ENCODE measurements at regions of chr11 and their contacts with region 1.

Region 1: GRCh38 chr11:33996498-33997454 is 54.8 kb upstream of the CAPRIN1 start:
- DNase-seq: peak; percentile 67
- H3K4me3 Mint-ChIP-seq: peak overlapping the region; percentile 8
- H3K27ac Mint-ChIP-seq: no peak overlapping the region
- H3K4me1 Mint-ChIP-seq: peaks cover 12% of the 10 kb centered on the region
- H3K27me3 Mint-ChIP-seq: peaks cover 46% of the 10 kb centered on the region

Region 2: DNA sequence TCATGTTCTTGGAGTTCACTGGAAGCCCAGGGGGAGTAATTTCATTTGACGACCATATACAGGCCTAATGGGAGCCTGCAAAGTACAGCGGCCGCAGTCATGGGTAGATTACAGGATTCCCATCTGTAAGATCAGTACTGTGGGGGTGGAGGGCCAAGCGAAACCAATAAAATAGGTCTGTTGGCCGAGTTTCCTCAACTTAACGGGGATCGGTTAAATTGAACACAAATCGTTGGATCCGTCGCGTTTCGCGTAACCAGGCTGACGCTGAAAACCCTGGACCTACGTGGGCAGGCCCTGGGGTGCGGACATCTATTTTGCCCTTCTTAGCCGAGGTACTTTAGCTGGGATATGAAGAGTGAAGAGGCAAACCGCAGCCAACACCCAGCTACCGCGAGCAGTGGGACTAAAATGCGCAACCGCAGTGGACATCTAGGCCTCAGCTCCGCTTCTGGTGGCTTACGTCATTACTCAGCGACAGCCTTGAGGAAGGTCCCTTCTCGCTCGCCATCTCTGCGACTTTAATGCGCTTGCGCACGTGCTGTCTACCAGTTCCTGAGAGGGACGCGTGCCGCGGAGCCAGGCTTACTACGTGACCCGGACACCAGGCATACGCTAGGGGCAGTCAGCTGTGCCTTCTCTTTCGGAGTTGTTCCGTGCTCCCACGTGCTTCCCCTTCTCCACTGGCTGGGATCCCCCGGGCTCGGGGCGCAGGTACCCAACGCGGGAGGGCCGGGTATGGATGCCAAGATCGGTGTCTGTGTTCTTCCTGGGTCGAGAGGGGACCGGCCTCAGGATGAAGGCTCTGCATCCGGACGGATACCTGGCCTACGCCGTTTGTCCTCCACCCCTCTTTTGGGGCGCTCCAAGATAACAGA is 108.5 kb after region 1 on chr11 and contains the start of gene NAT10:
- intact Hi-C with region 1: loop called (anchors 1 kb)
- DNase-seq: peak; percentile 97
- H3K4me3 Mint-ChIP-seq: peak within 1 kb of the TSS; percentile 95
- H3K27ac Mint-ChIP-seq: peak within 1 kb of the TSS; percentile 90
- H3K4me1 Mint-ChIP-seq: peaks cover 48% of the 10 kb centered on the region
- H3K27me3 Mint-ChIP-seq: no peaks in the 10 kb centered on the region
- total RNA-seq, gene NAT10: 157 and 158 TPM in 2 replicates

Region 3: DNA sequence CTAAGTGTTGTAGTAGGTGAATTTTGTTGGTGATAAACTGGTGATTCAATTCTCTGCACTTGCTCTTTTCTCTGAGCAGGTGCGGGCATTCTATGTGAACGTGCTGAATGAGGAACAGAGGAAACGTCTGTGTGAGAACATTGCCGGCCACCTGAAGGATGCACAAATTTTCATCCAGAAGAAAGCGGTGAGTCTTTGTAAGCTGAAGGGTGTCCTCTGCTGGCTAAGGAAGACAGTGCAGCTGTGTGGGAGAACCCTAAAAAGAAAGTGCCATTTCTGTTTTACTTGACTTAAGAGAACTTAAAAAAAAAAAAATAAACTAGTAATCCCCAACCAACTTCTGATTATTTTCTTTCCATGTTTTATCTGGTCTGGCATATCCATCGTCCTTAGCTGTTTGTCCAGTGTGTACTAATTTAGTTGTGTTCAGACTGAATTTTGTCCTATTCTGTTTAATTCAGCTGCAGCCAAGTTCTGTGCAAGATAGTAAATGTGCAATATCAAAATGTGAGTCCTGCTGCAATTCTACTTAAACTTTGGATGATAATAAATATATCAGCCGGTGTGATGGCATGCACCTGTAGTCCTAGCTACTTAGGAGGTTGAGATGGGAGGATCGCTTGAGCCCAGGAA is 471.5 kb after region 1 on chr11:
- intact Hi-C with region 1: loop called (anchors 1 kb)
- DNase-seq: peak; percentile 22
- H3K4me3 Mint-ChIP-seq: no peak overlapping the region
- H3K27ac Mint-ChIP-seq: no peak overlapping the region
- H3K4me1 Mint-ChIP-seq: peaks cover 6% of the 10 kb centered on the region
- H3K27me3 Mint-ChIP-seq: no peaks in the 10 kb centered on the region

Region 4: GRCh38 chr11:34492806-34493414 is 496.1 kb after region 1 on chr11:
- intact Hi-C with region 1: loop called (anchors 2 kb)
- DNase-seq: no peak
- H3K4me3 Mint-ChIP-seq: no peak overlapping the region
- H3K27ac Mint-ChIP-seq: no peak overlapping the region
- H3K4me1 Mint-ChIP-seq: no peaks in the 10 kb centered on the region
- H3K27me3 Mint-ChIP-seq: peaks cover 3% of the 10 kb centered on the region